ENCODE measurements at regions of chr18 and their contacts with region 1.

Region 1: GRCh38 chr18:56869189-56869777 is 218.1 kb downstream of the WDR7 start:
- DNase-seq: peak; percentile 44
- H3K4me3 Mint-ChIP-seq: no peak overlapping the region
- H3K27ac Mint-ChIP-seq: peak overlapping the region; percentile 86
- H3K4me1 Mint-ChIP-seq: peaks cover 28% of the 10 kb centered on the region
- H3K27me3 Mint-ChIP-seq: no peaks in the 10 kb centered on the region
- CTCF ChIP-seq: peak; percentile 74

Region 2: GRCh38 chr18:56902653-56903052 is 33.4 kb after region 1 on chr18:
- CTCF ChIA-PET with region 1: interaction called, 3 read pairs
- intact Hi-C with region 1: loop called (anchors 5 kb)
- DNase-seq: no peak
- H3K4me3 Mint-ChIP-seq: peak overlapping the region; percentile 25
- H3K27ac Mint-ChIP-seq: peak overlapping the region; percentile 88
- H3K4me1 Mint-ChIP-seq: peaks cover 50% of the 10 kb centered on the region
- H3K27me3 Mint-ChIP-seq: no peaks in the 10 kb centered on the region
- CTCF ChIP-seq: no peak

Region 3: GRCh38 chr18:57004366-57005121 is 135.3 kb after region 1 on chr18:
- CTCF ChIA-PET with region 1: interaction called, 3 read pairs
- intact Hi-C with region 1: loop called (anchors 10 kb)
- DNase-seq: no peak
- H3K4me3 Mint-ChIP-seq: peak overlapping the region; percentile 39
- H3K27ac Mint-ChIP-seq: peak overlapping the region; percentile 87
- H3K4me1 Mint-ChIP-seq: peaks cover 34% of the 10 kb centered on the region
- H3K27me3 Mint-ChIP-seq: no peaks in the 10 kb centered on the region
- CTCF ChIP-seq: no peak

Region 4: GRCh38 chr18:57273194-57273593 is 403.9 kb after region 1 on chr18:
- CTCF ChIA-PET with region 1: no interaction called
- intact Hi-C with region 1: loop called (anchors 5 kb)
- DNase-seq: peak; percentile 44
- H3K4me3 Mint-ChIP-seq: peak overlapping the region; percentile 16
- H3K27ac Mint-ChIP-seq: peak overlapping the region; percentile 66
- H3K4me1 Mint-ChIP-seq: peaks cover 90% of the 10 kb centered on the region
- H3K27me3 Mint-ChIP-seq: no peaks in the 10 kb centered on the region
- CTCF ChIP-seq: no peak

Region 5: GRCh38 chr18:57561728-57562423 is 692.6 kb after region 1 on chr18:
- CTCF ChIA-PET with region 1: no interaction called
- intact Hi-C with region 1: loop called (anchors 5 kb)
- DNase-seq: peak; percentile 44
- H3K4me3 Mint-ChIP-seq: no peak overlapping the region
- H3K27ac Mint-ChIP-seq: no peak overlapping the region
- H3K4me1 Mint-ChIP-seq: peaks cover 7% of the 10 kb centered on the region
- H3K27me3 Mint-ChIP-seq: no peaks in the 10 kb centered on the region
- CTCF ChIP-seq: peak; percentile 91